Activated CD4-positive, alpha-beta T cell treated with anti-CD3 and anti-CD28 coated beads for 36 hours (primary cell): ENCODE measurements at regions of chr15 and their contacts with region 1.

Region 1: GRCh38 chr15:69468241-69469121 is 15.9 kb downstream of the RPLP1 start:
- DNase-seq: peak; percentile 91
- ATAC-seq: peak; percentile 94
- H3K4me3 Mint-ChIP-seq: peak overlapping the region; percentile 59
- H3K27ac Mint-ChIP-seq: peak overlapping the region; percentile 85
- H3K4me1 Mint-ChIP-seq: peaks cover 27% of the 10 kb centered on the region
- H3K27me3 Mint-ChIP-seq: no peaks in the 10 kb centered on the region

Region 2: GRCh38 chr15:69323966-69324365 is 144.5 kb before region 1 on chr15:
- CTCF ChIA-PET with region 1: no interaction called
- POLR2A ChIA-PET with region 1: no interaction called
- intact Hi-C with region 1: loop called in 1 of 2 experiments (anchors 5 kb)
- DNase-seq: no peak
- ATAC-seq: no peak
- H3K4me3 Mint-ChIP-seq: no peak overlapping the region
- H3K27ac Mint-ChIP-seq: no peak overlapping the region
- H3K4me1 Mint-ChIP-seq: peaks cover 22% of the 10 kb centered on the region
- H3K27me3 Mint-ChIP-seq: peaks cover 18% of the 10 kb centered on the region

Region 3: GRCh38 chr15:69452692-69453521 is 15.6 kb before region 1 on chr15 and contains the start of gene RPLP1:
- CTCF ChIA-PET with region 1: interaction called, 41 read pairs
- POLR2A ChIA-PET with region 1: interaction called, 43 read pairs
- intact Hi-C with region 1: loop called in 1 of 2 experiments (anchors 2 kb)
- DNase-seq: peak; percentile 97
- ATAC-seq: peak; percentile 94
- H3K4me3 Mint-ChIP-seq: peak within 1 kb of the TSS; percentile 91
- H3K27ac Mint-ChIP-seq: peak within 1 kb of the TSS; percentile 99
- H3K4me1 Mint-ChIP-seq: peaks cover 24% of the 10 kb centered on the region
- H3K27me3 Mint-ChIP-seq: no peaks in the 10 kb centered on the region
- total RNA-seq, gene RPLP1: 1,576 to 2,330 TPM

Region 4: DNA sequence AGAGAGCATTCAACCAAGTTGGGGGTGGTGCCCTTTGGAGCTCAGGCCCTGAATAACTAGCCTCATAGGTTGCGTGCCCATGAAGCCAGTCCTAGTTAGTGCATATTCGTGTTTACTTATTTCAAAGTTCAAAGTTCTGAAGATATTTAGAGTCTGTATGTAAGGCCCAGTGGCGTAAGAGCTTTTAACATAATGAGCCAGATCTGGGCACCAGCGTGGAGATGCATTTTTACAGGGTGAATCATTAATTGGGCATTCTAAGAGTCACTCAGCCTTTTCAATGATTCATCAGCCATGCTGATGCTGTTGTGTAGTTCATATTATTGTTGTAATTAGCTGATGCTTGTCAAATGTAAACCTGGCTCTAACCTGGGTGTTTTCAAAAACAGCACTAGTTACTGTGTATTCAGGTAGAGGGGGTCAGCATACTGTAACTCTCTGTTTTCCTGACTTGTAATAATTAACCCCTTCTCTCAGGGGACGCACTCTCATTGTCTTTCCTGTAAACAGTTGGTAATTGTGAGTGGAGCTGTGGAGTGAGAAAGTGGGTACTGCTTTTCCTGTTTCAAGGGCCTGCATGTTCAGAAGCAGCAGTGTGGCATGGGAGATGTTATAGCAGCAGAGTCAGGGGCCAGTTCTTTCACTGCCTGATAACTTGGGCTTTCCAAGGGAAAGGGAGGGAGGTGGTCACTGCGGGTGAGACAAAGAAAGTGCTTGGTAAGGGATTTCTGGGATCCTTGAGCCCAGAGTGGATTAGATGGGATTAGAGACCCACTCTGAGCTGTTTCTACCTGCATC is 89.1 kb after region 1 on chr15:
- CTCF ChIA-PET with region 1: no interaction called
- POLR2A ChIA-PET with region 1: no interaction called
- intact Hi-C with region 1: no loop called
- DNase-seq: no peak
- ATAC-seq: peak; percentile 16
- H3K4me3 Mint-ChIP-seq: no peak overlapping the region
- H3K27ac Mint-ChIP-seq: no peak overlapping the region
- H3K4me1 Mint-ChIP-seq: peaks cover 9% of the 10 kb centered on the region
- H3K27me3 Mint-ChIP-seq: no peaks in the 10 kb centered on the region

Region 5: DNA sequence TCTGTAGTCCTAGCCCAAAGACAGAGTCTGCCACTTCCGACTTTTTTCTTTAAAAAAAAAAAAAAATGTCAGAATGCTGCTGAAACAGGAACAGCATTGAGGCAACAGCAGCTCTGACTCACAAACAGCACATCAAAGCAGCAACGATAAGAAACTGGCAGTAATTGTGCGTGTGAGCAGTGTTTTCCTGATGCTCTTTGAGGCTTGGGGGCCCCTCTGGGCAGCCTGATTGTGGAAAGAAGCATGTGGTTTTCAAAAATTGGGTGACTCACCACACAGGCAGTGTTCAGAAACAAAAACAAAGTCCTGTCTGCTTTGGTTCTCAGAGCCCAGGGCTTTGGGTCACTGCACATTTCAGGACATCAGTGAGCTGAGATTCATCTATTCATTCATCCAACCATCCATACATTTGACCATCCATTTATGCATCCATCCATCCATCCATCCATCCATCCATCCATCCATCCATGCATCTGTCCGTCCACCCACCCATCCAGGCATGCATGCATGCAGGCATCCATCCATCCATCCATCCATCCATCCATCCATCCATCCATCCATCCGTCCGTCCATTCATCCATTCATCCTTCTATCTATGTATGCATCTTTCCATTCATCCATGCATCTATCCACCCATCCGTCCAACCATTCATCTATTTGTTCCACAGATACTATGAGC is 292.5 kb after region 1 on chr15:
- CTCF ChIA-PET with region 1: interaction called, 3 read pairs
- POLR2A ChIA-PET with region 1: interaction called, 3 read pairs
- intact Hi-C with region 1: loop called (anchors 1 to 2 kb)
- DNase-seq: peak; percentile 89
- ATAC-seq: peak; percentile 42
- H3K4me3 Mint-ChIP-seq: peak overlapping the region; percentile 25
- H3K27ac Mint-ChIP-seq: peak overlapping the region; percentile 94
- H3K4me1 Mint-ChIP-seq: peaks cover 72% of the 10 kb centered on the region
- H3K27me3 Mint-ChIP-seq: no peaks in the 10 kb centered on the region

Region 6: GRCh38 chr15:70763120-70763878 is 1294.8 kb after region 1 on chr15 and contains the start of gene UACA:
- CTCF ChIA-PET with region 1: no interaction called
- POLR2A ChIA-PET with region 1: no interaction called
- intact Hi-C with region 1: loop called in 1 of 2 experiments (anchors 5 kb)
- DNase-seq: peak; percentile 91
- ATAC-seq: peak; percentile 98
- H3K4me3 Mint-ChIP-seq: peak within 1 kb of the TSS; percentile 77
- H3K27ac Mint-ChIP-seq: peak within 1 kb of the TSS; percentile 45
- H3K4me1 Mint-ChIP-seq: peaks cover 19% of the 10 kb centered on the region
- H3K27me3 Mint-ChIP-seq: peaks cover 27% of the 10 kb centered on the region
- total RNA-seq, gene UACA: 6.6 TPM